ENCODE measurements at regions of chr19 and their contacts with region 1.

Region 1: GRCh38 chr19:43532962-43533545 is at the start of gene ZNF575:
- DNase-seq: peak; percentile 70 to 93 (median 81)
- ATAC-seq: peak; percentile 48
- H3K4me3 ChIP-seq: peak within 1 kb of the TSS; percentile 77
- H3K4me3 Mint-ChIP-seq: peak within 1 kb of the TSS; percentile 96
- H3K27ac ChIP-seq: peak within 1 kb of the TSS; percentile 53 to 61
- H3K27ac Mint-ChIP-seq: peak within 1 kb of the TSS; percentile 92
- H3K4me1 ChIP-seq: peaks cover 21% of the 10 kb centered on the region
- H3K4me1 Mint-ChIP-seq: peaks cover 21% of the 10 kb centered on the region
- H3K27me3 ChIP-seq: no peaks in the 10 kb centered on the region
- H3K27me3 Mint-ChIP-seq: no peaks in the 10 kb centered on the region
- CTCF ChIP-seq: peak; percentile 13
- total RNA-seq, gene ZNF575: 2.6 to 2.7 TPM

Region 2: DNA sequence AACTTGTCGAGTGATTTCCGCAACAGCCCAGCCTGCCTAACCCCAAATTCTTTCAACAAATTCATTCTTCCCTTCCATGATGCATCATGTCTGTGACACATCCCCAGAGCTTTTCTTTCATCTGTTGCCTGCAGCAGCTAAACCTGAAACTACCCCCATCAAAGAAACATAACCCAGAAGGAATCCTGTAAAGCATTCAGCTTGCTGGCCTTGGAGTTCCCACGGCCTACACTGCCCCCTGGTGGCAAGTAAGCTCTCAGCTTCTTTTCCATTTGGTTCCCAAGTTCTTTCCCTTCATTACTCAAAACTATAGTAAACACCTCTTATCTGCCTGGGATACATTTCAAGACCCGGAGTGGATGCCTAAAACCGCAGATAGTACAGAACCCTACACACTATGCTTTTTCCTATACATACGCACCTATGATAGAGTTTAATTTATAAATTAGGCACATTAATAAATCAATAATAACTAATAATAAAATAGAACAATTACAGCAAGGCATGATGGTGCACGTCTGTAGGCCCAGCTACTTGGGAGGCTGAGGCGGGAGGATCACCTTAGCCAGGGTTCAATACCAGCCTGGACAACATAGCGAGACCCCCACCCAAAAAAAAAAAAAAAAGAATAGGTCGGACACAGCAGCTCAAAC is 13.5 kb before region 1 on chr19:
- CTCF ChIA-PET with region 1: interaction called, 10 read pairs
- POLR2A ChIA-PET with region 1: interaction called, 17 read pairs
- intact Hi-C with region 1: no loop called
- DNase-seq: peak; percentile 71 to 91 (median 78)
- ATAC-seq: peak; percentile 99
- H3K4me3 ChIP-seq: no peak overlapping the region
- H3K4me3 Mint-ChIP-seq: no peak overlapping the region
- H3K27ac ChIP-seq: no peak overlapping the region
- H3K27ac Mint-ChIP-seq: peak overlapping the region; percentile 25
- H3K4me1 ChIP-seq: peaks cover 10% of the 10 kb centered on the region
- H3K4me1 Mint-ChIP-seq: peaks cover 11% of the 10 kb centered on the region
- H3K27me3 ChIP-seq: no peaks in the 10 kb centered on the region
- H3K27me3 Mint-ChIP-seq: no peaks in the 10 kb centered on the region
- CTCF ChIP-seq: peak; percentile 92

Region 3: GRCh38 chr19:43562698-43563241 is 29.7 kb after region 1 on chr19:
- CTCF ChIA-PET with region 1: no interaction called
- POLR2A ChIA-PET with region 1: interaction called, 17 read pairs
- intact Hi-C with region 1: loop called in 1 of 2 experiments (anchors 5 kb)
- DNase-seq: peak; percentile 56 to 96 (median 74)
- ATAC-seq: peak; percentile 89
- H3K4me3 ChIP-seq: peak overlapping the region; percentile 47
- H3K4me3 Mint-ChIP-seq: peak overlapping the region; percentile 85
- H3K27ac ChIP-seq: peak overlapping the region; percentile 82 to 93
- H3K27ac Mint-ChIP-seq: peak overlapping the region; percentile 96
- H3K4me1 ChIP-seq: peaks cover 50% of the 10 kb centered on the region
- H3K4me1 Mint-ChIP-seq: peaks cover 62% of the 10 kb centered on the region
- H3K27me3 ChIP-seq: no peaks in the 10 kb centered on the region
- H3K27me3 Mint-ChIP-seq: no peaks in the 10 kb centered on the region
- CTCF ChIP-seq: no peak

Region 4: GRCh38 chr19:43668406-43669158 is 135.5 kb after region 1 on chr19:
- CTCF ChIA-PET with region 1: no interaction called
- POLR2A ChIA-PET with region 1: interaction called, 13 read pairs
- intact Hi-C with region 1: no loop called
- DNase-seq: peak; percentile 87 to 99 (median 96)
- ATAC-seq: peak; percentile 80
- H3K4me3 ChIP-seq: peak overlapping the region; percentile 68
- H3K4me3 Mint-ChIP-seq: peak overlapping the region; percentile 87
- H3K27ac ChIP-seq: peak overlapping the region in 1 of 2 donors; percentile 37
- H3K27ac Mint-ChIP-seq: peak overlapping the region; percentile 61
- H3K4me1 ChIP-seq: peaks cover 54% of the 10 kb centered on the region
- H3K4me1 Mint-ChIP-seq: peaks cover 52% of the 10 kb centered on the region
- H3K27me3 ChIP-seq: no peaks in the 10 kb centered on the region
- H3K27me3 Mint-ChIP-seq: no peaks in the 10 kb centered on the region
- CTCF ChIP-seq: no peak